ENCODE measurements at regions of chr4 and their contacts with region 1.

Region 1: DNA sequence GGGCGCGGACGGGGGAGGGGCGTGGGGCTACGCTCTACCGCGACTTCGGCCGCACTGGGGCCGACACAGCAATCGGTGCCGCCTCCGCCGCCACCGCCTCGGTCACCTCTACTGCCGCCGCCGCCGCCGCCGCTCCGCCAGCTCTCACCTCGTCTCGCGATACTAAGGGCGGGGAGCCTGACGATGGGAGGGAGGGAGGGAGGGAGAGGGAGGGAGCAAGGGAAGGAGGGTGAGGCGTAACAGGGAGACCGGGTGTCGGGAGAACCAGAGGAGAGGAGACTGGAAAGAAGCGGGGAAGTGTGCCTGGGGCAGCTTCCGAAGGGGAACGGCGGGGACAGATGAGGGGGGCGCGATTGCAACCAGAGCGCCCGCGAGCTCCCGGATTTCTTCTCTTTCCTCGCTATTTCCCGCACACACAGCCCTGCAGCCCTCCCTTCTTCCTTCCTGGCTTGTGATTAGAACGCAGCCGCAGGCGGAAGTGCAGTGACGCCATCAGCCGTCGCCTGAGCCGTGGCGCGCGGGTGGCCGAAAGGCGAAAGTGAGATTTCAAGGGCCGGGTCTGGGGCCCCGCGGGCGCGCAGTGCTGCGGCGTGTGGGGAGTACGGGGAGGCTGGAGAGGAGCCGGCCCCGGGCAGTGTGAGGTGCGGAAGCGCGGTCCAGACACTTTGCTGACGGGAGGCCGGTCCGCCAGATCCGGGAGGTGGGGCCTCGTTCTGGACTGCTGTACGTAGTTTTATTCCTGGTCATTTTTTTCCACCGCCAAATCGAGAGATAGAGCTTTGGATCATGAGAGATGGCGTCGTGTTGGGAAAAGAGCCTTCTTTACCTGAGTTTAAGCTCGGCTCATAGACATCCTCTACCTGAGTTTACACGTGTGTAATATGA is at the start of gene ANKRD17:
- DNase-seq: peak; percentile 91
- H3K4me3 Mint-ChIP-seq: peak within 1 kb of the TSS; percentile 99
- H3K27ac Mint-ChIP-seq: peak within 1 kb of the TSS; percentile 99
- H3K4me1 Mint-ChIP-seq: peaks cover 48% of the 10 kb centered on the region
- H3K27me3 Mint-ChIP-seq: no peaks in the 10 kb centered on the region
- total RNA-seq, gene ANKRD17: 68.6 and 72.4 TPM in 2 replicates

Region 2: GRCh38 chr4:72701987-72702819 is 556.7 kb before region 1 on chr4:
- intact Hi-C with region 1: loop called (anchors 2 kb)
- DNase-seq: no peak
- H3K4me3 Mint-ChIP-seq: peak overlapping the region; percentile 74
- H3K27ac Mint-ChIP-seq: no peak overlapping the region
- H3K4me1 Mint-ChIP-seq: peaks cover 8% of the 10 kb centered on the region
- H3K27me3 Mint-ChIP-seq: peaks cover 9% of the 10 kb centered on the region

Region 3: DNA sequence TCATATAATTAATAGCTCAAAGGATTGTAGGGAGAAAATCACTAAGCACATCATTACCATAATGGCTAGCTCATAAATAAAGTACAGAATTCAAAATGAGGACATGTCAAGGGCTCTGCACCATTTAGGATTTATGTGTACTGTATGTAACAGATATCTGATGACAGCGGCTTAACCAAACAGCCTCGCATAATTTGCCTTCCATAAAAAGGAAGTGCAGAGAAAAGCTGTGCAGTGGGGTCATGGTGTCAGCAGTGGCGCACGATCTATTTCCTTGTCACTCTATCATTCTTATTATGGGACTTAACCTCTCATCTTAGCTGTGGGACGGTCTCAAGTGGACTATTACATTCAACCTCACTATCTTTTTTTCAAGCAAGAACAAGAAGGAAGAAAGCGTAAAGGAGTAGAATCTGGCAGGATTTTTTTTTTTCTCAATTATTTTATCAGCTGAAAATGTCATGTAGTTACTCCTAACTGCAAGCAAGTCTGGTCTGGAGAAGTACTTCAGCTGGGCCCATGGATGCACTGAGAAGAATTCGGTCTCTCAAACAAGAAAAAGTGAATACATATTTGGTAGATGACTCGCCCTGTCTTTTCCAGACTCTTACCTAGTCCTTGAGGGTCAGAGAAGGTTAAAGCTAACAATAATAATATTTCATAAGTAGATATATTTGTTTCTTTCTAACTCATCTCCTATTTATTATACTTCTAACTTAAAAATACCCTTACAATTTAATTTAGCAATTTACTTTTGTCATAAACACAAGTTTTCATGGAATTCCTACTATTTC is 284.0 kb before region 1 on chr4:
- intact Hi-C with region 1: no loop called
- DNase-seq: no peak
- H3K4me3 Mint-ChIP-seq: no peak overlapping the region
- H3K27ac Mint-ChIP-seq: no peak overlapping the region
- H3K4me1 Mint-ChIP-seq: no peaks in the 10 kb centered on the region
- H3K27me3 Mint-ChIP-seq: peaks cover 2% of the 10 kb centered on the region

Region 4: DNA sequence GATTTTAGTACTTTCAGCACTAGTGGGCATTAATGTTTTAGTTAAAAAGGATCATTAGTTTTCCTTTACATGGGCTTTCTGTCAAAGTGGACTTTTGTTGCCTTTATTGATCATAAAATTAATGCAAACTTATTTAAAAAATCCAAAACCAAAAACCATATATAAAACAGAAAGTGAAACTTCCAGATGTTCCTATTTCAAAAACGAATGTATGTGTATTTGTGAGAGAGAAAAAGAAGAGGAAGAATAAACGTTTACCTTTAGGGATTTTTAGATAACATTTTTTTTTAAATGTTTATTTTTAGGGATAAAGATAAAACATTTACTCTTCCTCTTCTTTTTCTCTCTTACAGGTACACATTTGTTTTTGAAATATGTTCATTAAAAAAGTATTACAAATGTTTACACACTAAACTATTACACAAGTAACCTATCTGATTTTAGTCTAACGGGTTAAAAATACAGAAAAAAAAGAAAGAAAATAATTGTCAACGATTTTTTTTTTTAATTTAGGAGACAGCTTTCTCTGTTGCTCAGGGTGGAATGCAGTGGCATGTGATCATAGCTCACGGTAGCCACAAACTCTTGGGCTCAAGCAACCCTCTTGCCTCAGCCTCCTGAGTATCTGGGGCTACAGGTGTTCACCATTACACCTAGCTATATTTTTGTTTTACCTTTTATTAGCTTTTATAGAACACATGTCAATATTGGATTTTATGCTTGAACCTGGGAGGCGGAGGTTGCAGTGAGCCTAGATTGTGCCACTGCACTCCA is 172.6 kb before region 1 on chr4:
- intact Hi-C with region 1: loop called (anchors 5 kb)
- DNase-seq: no peak
- H3K4me3 Mint-ChIP-seq: peak overlapping the region; percentile 56
- H3K27ac Mint-ChIP-seq: no peak overlapping the region
- H3K4me1 Mint-ChIP-seq: peaks cover 12% of the 10 kb centered on the region
- H3K27me3 Mint-ChIP-seq: no peaks in the 10 kb centered on the region

Region 5: DNA sequence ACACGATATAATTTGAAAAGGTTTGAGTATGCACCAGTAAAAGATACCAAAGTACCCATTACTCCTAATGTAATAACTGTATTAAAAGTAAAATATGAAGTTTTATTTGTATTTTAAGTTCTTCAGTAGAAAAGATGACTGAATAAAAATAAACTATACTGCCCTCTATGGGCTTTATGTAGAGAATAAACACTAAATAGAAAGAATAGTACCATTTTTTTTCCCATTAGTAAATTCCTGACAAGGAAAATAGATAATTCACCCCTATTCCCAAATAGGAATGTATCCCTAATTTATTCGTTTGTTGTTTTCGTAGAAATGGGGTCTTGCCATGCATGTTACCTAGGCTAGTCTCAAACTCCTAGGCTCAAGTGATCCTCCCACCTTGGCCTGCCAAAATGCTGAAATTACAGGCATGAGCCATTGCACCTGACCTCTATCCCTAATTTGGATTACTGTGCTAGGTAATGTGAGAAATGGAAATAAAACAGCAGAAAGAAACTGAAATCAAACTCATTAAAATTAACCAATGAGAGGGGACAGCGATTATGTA is 115.9 kb before region 1 on chr4:
- intact Hi-C with region 1: loop called (anchors 2 kb)
- DNase-seq: no peak
- H3K4me3 Mint-ChIP-seq: no peak overlapping the region
- H3K27ac Mint-ChIP-seq: no peak overlapping the region
- H3K4me1 Mint-ChIP-seq: peaks cover 14% of the 10 kb centered on the region
- H3K27me3 Mint-ChIP-seq: no peaks in the 10 kb centered on the region

Region 6: GRCh38 chr4:73446336-73446938 is 187.5 kb after region 1 on chr4:
- intact Hi-C with region 1: loop called (anchors 10 kb)
- DNase-seq: no peak
- H3K4me3 Mint-ChIP-seq: no peak overlapping the region
- H3K27ac Mint-ChIP-seq: no peak overlapping the region
- H3K4me1 Mint-ChIP-seq: no peaks in the 10 kb centered on the region
- H3K27me3 Mint-ChIP-seq: peaks cover under 1% of the 10 kb centered on the region

Region 7: DNA sequence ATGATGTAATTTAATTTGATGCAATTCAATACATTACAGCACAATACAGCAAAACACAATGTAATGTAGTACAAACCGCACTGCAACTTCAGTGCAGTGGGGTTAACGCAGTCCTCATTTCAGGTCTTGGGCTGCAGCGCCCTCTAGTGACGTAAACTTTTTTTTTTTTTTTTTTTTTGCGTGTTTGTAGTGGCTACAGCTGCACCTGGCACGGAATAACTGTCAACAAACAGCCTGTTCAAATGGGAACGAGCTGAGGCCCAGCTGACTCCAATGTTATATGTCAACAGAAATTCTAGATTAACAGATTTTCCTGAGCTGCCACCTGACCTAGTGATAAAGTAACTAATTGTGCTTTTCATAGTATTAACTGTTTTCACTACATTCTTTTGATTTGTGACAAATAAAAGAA is 394.8 kb after region 1 on chr4:
- intact Hi-C with region 1: loop called (anchors 10 kb)
- DNase-seq: no peak
- H3K4me3 Mint-ChIP-seq: no peak overlapping the region
- H3K27ac Mint-ChIP-seq: no peak overlapping the region
- H3K4me1 Mint-ChIP-seq: no peaks in the 10 kb centered on the region
- H3K27me3 Mint-ChIP-seq: peaks cover 10% of the 10 kb centered on the region

Measured in activated T-helper 1 cell treated with anti-CD3 and anti-CD28 coated beads, Interleukin-12 subunit alpha, Interleukin-12 subunit beta, Interleukin-2, Interleukin-4 antibody, amounts not matched to agents 30 ng/mL and 10 ng/mL and 1 ng/mL, durations not matched to agents 14 hours and 24 hours and 36 hours (primary cell).